ENCODE measurements at regions of chr2 and their contacts with region 1.

Region 1: DNA sequence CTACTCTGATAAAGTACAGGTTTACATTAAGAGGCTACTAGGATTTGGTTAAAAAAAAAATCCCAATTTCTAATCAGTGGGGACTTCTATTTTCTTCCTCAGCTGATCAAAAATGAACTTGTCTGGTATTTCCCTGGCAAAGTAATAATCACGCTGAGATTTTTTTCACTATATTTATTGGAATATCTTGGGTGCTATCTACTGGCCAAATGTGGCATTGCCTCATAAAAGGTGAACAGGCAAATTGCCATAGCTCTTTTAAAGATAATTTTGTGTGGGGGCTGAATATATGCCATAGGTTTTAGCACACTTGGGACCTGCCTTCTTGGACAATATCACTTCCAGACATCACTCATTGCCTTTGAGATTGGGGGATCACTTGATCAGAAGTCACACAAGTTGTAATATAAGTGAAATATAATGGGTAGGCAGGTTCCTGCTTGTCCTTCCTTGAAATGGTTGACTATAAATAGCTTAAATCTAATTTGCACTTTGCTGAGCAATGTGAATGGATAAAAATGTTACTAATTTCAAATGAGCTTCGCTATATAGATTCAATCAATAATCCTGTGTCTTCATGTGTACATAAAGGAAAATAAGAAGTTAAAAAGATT is 7.0 kb upstream of the NXPH2 start:
- DNase-seq: no peak
- H3K4me3 ChIP-seq: no peak overlapping the region
- H3K27ac ChIP-seq: no peak overlapping the region
- H3K27me3 ChIP-seq: peaks cover 2% of the 10 kb centered on the region
- CTCF ChIP-seq: peak; percentile 70

Region 2: DNA sequence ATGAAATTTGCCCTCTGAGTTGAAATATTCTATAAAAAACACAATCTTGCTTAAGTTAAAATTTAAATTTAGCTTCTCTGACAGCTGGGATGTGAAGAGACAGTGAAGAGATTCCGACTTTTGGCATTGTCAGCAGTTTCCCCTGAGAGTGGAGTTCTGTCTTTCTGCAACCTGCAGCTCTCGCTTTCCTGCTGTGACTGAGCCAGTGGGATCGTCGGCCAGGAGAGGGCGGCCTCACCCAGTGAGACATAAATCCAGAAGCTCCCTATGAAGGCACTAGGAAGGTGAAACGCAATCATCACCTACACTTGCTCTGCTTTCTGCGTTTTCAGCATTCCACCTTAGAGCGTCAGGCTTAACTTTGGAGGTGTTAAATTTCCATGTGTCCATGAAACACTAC is 898.3 kb before region 1 on chr2:
- CTCF ChIA-PET with region 1: interaction called, 22 read pairs
- POLR2A ChIA-PET with region 1: no interaction called
- DNase-seq: no peak
- H3K4me3 ChIP-seq: no peak overlapping the region
- H3K27ac ChIP-seq: no peak overlapping the region
- H3K27me3 ChIP-seq: no peaks in the 10 kb centered on the region
- CTCF ChIP-seq: peak; percentile 56

Region 3: DNA sequence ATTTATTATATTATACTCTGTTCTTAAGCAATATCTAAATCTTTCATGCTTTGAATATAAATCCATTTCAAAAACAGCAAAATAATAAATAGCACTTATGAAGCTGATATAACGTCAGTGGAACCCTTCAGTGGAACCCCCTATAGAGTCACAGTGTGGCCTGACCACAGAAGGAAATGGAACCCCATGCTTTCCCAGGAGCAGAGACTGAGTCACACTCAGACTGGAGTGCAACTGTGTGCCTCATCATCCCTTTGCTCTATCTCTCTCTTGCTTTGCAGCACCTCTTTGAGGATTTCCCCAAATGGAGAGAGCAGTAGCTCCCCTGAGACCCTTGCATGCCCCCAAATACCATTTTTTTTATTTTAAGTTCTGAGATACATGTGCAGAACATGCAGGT is 20.1 kb before region 1 on chr2:
- CTCF ChIA-PET with region 1: no interaction called
- POLR2A ChIA-PET with region 1: no interaction called
- DNase-seq: no peak
- H3K4me3 ChIP-seq: no peak overlapping the region
- H3K27ac ChIP-seq: no peak overlapping the region
- H3K27me3 ChIP-seq: no peaks in the 10 kb centered on the region
- CTCF ChIP-seq: no peak

Measured in AG04450 (cell line).